Breast epithelium (tissue), 4 donors: ENCODE measurements at regions of chr4 and their contacts with region 1.

Region 1: GRCh38 chr4:118373614-118374255 is 20.9 kb upstream of the PRSS12 start:
- DNase-seq: no peak
- H3K4me3 ChIP-seq: no peak overlapping the region
- H3K27ac ChIP-seq: no peak overlapping the region
- H3K4me1 ChIP-seq: no peaks in the 10 kb centered on the region
- H3K27me3 ChIP-seq: no peaks in the 10 kb centered on the region
- CTCF ChIP-seq: no peak
- POLR2A ChIP-seq: no peak

Region 2: GRCh38 chr4:117916728-117917127 is 457.0 kb before region 1 on chr4:
- intact Hi-C with region 1: loop called (anchors 10 kb)
- DNase-seq: no peak
- H3K4me3 ChIP-seq: no peak overlapping the region
- H3K27ac ChIP-seq: no peak overlapping the region
- H3K4me1 ChIP-seq: no peaks in the 10 kb centered on the region
- H3K27me3 ChIP-seq: no peaks in the 10 kb centered on the region
- CTCF ChIP-seq: no peak
- POLR2A ChIP-seq: no peak

Region 3: GRCh38 chr4:118348886-118349285 is 24.8 kb before region 1 on chr4:
- intact Hi-C with region 1: no loop called
- DNase-seq: no peak
- H3K4me3 ChIP-seq: no peak overlapping the region
- H3K27ac ChIP-seq: no peak overlapping the region
- H3K4me1 ChIP-seq: no peaks in the 10 kb centered on the region
- H3K27me3 ChIP-seq: peaks cover 0 to 8% of the 10 kb centered on the region in 2 donors
- CTCF ChIP-seq: no peak
- POLR2A ChIP-seq: no peak